Motor neuron (in vitro differentiated cells): ENCODE measurements at regions of chr3 and their contacts with region 1.

Region 1: GRCh38 chr3:42118762-42119361 is 27.7 kb downstream of the TRAK1 start:
- ATAC-seq: peak; percentile 31 to 94 (median 72)
- H3K4me3 ChIP-seq: no peak overlapping the region
- H3K27ac ChIP-seq: peak overlapping the region in 1 of 2 donors; percentile 18
- H3K4me1 ChIP-seq: no peaks in the 10 kb centered on the region

Region 2: GRCh38 chr3:41933146-41933676 is 185.7 kb before region 1 on chr3:
- in situ Hi-C with region 1: loop called in 1 of 9 experiments (anchors 25 kb)
- ATAC-seq: no peak
- H3K4me3 ChIP-seq: no peak overlapping the region
- H3K27ac ChIP-seq: no peak overlapping the region
- H3K4me1 ChIP-seq: no peaks in the 10 kb centered on the region

Region 3: GRCh38 chr3:42214565-42215283 is 95.9 kb after region 1 on chr3:
- in situ Hi-C with region 1: loop called in 1 of 9 experiments (anchors 25 kb)
- ATAC-seq: no peak
- H3K4me3 ChIP-seq: no peak overlapping the region
- H3K27ac ChIP-seq: no peak overlapping the region
- H3K4me1 ChIP-seq: no peaks in the 10 kb centered on the region

Region 4: DNA sequence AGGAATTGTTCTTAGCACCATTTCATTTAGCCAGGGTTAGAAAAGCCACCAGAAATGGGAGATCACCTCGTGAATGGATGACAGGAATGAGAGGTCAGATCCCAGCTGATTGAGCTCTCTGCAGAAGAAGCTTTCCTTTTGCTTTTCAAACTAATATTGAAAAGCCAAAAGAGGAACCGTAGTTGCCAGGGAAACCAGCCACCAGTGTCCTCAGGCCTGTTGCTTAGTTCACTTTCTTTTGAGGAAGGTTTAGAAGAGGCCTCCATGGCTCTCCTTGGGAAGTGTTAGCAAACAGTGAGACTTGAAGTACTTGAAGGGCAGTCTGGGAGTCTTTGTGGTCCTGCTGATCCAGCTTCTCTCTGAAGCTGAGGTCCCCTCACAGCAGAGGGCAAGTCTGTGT is 154.5 kb after region 1 on chr3:
- in situ Hi-C with region 1: no loop called
- ATAC-seq: no peak
- H3K4me3 ChIP-seq: no peak overlapping the region
- H3K27ac ChIP-seq: no peak overlapping the region
- H3K4me1 ChIP-seq: no peaks in the 10 kb centered on the region